ENCODE measurements at regions of chrX and their contacts with region 1.

Region 1: DNA sequence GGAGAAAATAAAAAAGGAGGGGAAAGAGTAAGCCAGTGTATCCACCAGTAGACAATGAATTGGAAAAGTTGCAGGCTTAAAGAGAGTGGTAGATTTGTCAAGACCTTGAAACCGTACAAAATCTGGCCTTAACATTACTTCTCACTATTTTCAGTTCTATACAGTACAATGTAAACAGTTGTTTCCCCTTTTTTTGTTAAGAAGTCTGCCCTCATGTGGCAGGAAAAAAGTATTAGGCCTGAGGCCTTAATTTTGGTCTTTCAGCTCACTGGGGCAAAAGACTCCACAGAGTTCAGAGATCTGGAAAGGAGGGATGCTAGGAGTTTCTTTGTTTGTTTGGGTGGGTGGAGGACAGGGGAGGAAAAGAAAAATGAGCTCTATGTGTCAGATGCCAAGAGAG is 92.8 kb upstream of the CCDC160 start:
- DNase-seq: no peak
- H3K4me3 ChIP-seq: no peak overlapping the region
- H3K27ac ChIP-seq: no peak overlapping the region
- H3K4me1 ChIP-seq: no peaks in the 10 kb centered on the region
- H3K27me3 ChIP-seq: no peaks in the 10 kb centered on the region
- CTCF ChIP-seq: peak in 1 of 4 experiments; percentile 26
- POLR2A ChIP-seq: no peak

Region 2: GRCh38 chrX:134396174-134396573 is 251.9 kb after region 1 on chrX:
- intact Hi-C with region 1: loop called (anchors 10 kb)
- DNase-seq: no peak
- H3K4me3 ChIP-seq: no peak overlapping the region
- H3K27ac ChIP-seq: no peak overlapping the region
- H3K4me1 ChIP-seq: no peaks in the 10 kb centered on the region
- H3K27me3 ChIP-seq: no peaks in the 10 kb centered on the region
- CTCF ChIP-seq: peak in 3 of 4 experiments; percentile 34 to 59 (median 56)
- POLR2A ChIP-seq: no peak

Measured in prostate gland (tissue), 2 donors.